BJ (cell line): ENCODE measurements at regions of chr1 and their contacts with region 1.

Region 1: DNA sequence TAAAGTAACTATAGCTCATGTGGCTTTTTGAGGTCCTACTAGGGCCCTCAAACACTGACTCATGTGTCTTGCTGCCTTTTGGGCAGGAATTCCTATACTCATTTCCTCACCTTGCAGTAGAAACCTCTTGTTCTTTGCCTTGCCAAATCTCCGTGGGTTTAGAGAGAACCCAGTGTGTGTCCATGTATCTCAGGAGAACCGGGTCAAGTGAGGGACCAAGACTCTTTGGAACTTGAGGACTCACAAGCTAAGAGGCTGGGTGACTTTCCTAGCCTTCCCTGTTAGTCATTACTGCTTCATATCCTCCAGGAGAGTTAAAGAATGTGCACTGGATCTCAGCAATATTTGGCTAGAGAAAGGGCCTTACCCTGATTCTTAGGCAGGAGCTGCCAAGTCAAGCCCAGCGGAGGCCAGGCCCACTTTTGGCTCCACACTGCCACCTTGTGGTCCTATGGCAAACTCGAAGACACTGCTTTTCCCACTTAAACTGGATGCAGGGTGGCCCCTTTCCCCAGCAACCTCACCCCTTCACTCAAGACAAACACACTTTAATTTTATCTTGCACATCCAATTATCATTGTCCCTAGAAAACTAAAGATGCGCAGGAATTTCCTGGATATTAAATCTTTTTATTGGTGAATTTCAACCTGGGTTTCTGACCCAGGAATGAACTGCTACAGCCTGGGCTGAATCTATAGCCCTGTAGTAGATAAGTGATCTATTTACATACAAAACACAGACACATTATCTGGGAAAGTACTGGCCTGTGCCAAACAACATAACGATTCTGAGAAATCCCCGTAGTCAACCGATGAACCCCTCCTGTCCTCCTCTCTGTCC is 10.6 kb downstream of the AVPR1B start:
- DNase-seq: peak; percentile 49
- H3K4me3 ChIP-seq: no peak overlapping the region
- H3K27me3 ChIP-seq: peaks cover 12% of the 10 kb centered on the region
- CTCF ChIP-seq: peak; percentile 88

Region 2: GRCh38 chr1:205760606-205761005 is 345.9 kb before region 1 on chr1:
- CTCF ChIA-PET with region 1: no interaction called
- POLR2A ChIA-PET with region 1: no interaction called
- DNase-seq: no peak
- H3K4me3 ChIP-seq: no peak overlapping the region
- H3K27me3 ChIP-seq: no peaks in the 10 kb centered on the region
- CTCF ChIP-seq: no peak

Region 3: DNA sequence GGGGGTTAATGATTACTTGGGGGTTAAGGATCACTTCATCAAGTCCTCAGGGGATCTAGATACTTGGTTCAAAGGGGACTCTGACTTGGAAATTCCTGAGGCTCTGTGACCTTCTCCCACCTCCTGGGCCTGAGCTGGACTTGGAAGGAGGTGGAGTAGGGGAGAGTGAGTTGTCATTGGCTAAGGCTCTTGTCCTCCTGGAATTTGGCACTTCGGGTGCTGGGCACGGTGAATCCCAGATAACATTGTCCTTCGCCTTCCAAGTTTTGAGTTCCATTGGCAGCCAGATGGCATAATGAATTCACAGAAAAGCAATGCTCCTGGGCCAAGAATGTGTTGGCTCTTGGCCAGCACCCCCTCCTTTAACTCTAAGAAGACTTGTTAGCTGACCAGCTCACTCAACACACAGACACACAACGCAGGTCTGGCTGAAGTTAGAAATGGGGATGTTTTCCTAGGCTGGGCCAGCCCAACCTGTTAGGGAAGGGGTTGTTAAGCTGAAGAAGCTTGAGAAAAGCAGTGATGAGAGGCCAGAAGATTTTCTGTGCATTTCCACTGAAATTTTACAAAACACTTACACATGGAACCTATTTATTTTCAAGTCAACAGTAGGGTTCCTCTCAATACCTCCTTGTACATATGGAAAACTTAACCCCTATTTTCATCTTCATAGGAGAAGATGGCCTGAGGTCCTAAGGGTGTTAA is 192.9 kb before region 1 on chr1:
- CTCF ChIA-PET with region 1: interaction called, 12 read pairs
- POLR2A ChIA-PET with region 1: no interaction called
- DNase-seq: no peak
- H3K4me3 ChIP-seq: no peak overlapping the region
- H3K27me3 ChIP-seq: no peaks in the 10 kb centered on the region
- CTCF ChIP-seq: no peak

Region 4: DNA sequence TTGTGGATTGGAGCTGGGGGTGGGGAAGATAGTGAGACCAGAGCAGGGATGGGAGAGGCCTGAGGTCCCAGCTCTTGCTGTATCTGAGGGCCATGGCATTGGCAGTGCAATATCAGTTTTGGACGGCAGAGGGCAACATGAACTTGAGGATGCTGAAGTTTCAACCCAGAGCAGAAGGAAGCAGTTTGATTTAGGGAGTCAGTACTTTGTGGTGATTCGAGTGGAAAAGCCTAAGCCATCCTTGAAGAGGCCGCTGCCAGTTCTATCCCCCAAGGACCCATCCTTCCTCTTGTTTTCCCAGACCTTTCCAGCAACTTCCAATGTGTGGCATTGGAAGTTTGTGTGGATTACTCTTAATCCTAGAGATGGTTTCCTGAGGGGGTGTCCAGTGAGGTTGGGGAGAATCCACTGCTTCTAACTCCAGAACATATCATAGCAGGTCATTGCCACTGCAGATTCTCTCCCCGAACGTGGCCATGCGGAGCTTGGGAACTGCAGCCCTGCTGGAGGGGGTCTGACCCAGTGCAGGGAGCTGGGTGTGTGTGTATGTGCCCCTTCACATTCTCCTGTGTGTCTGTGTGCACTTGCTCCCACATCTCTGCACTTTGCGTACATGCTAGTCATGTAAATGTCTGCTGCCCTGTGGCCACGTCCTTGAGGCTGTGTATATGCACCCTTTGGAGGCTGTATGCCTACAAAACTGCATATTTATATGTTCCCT is 187.4 kb before region 1 on chr1:
- CTCF ChIA-PET with region 1: interaction called, 12 read pairs
- POLR2A ChIA-PET with region 1: no interaction called
- DNase-seq: no peak
- H3K4me3 ChIP-seq: no peak overlapping the region
- H3K27me3 ChIP-seq: no peaks in the 10 kb centered on the region; the same call in 1 of the 2 replicates
- CTCF ChIP-seq: peak; percentile 88

Region 5: GRCh38 chr1:205994346-205994745 is 112.2 kb before region 1 on chr1:
- CTCF ChIA-PET with region 1: interaction called, 10 read pairs
- POLR2A ChIA-PET with region 1: no interaction called
- DNase-seq: no peak
- H3K4me3 ChIP-seq: no peak overlapping the region
- H3K27me3 ChIP-seq: no peaks in the 10 kb centered on the region
- CTCF ChIP-seq: no peak

Region 6: GRCh38 chr1:206030714-206031113 is 75.8 kb before region 1 on chr1:
- CTCF ChIA-PET with region 1: interaction called, 26 read pairs
- POLR2A ChIA-PET with region 1: no interaction called
- DNase-seq: no peak
- H3K4me3 ChIP-seq: no peak overlapping the region
- H3K27me3 ChIP-seq: peaks cover 14% of the 10 kb centered on the region
- CTCF ChIP-seq: peak; percentile 94

Region 7: DNA sequence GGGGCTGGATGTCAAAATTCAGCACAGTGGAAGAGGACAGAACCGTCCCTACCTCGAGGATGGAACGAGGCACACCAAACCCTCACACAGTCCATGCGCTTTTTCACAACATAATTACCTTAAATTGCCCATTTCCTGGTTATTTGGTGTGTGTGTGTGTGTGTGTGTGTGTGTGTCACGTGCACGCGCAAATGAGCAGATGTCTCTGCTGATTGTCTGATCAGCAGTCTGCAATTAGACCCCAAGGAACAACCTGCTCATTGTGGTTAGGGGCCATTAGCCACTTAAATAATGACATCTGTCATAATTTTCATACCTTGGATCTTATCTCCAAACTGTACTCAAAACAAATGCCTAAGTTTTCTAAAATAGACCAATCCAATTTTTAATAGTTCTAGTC is 12.5 kb before region 1 on chr1:
- CTCF ChIA-PET with region 1: interaction called, 18 read pairs
- POLR2A ChIA-PET with region 1: no interaction called
- DNase-seq: no peak
- H3K4me3 ChIP-seq: no peak overlapping the region
- H3K27me3 ChIP-seq: peaks cover 16% of the 10 kb centered on the region
- CTCF ChIP-seq: no peak